Esophagus squamous epithelium (tissue), 5 donors: ENCODE measurements at regions of chr13 and their contacts with region 1.

Region 1: GRCh38 chr13:48412881-48413351 is at the start of gene LPAR6:
- DNase-seq: no peak
- H3K4me3 ChIP-seq: peak within 1 kb of the TSS; percentile 44 to 70 (median 56)
- H3K27ac ChIP-seq: peak within 1 kb of the TSS; percentile 83 to 95 (median 89)
- H3K4me1 ChIP-seq: peaks cover 0 to 42% (median 10%) of the 10 kb centered on the region in 3 donors
- H3K27me3 ChIP-seq: no peaks in the 10 kb centered on the region
- CTCF ChIP-seq: no peak
- POLR2A ChIP-seq: peak in 3 of 4 donors; percentile 82 to 90 (median 87)
- total RNA-seq, gene LPAR6: 50.6 to 102 (median 82.2) TPM

Region 2: DNA sequence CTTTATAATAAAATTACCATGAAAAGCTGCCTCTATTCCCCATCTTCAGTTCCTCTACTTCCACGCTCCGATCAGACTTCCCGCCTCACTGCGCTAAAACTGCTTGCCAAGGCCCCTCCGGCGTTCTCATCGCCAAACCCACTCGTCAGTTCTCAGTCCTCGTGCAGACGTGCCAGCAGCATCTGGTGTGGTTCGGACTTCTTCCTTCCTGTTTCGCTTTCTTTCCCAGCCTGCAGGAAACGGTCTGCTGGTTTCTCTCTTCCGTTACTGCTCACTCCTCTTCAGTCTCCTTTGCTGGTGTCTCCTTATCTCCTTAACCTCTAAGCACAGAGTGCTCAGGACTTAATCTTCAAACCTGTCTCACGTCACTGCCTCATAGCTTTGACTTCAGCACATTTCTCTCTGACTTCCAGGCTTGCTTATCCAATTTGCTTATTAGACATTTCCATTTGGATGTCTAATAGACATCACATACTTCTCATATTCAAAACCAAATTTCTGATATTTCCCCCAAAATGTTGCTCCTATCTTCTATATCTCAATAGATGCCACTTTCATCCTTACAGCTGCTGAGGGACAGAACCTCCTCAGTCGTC is 79.7 kb after region 1 on chr13:
- intact Hi-C with region 1: loop called (anchors 10 kb)
- DNase-seq: peak; percentile 27
- H3K4me3 ChIP-seq: peak overlapping the region in 3 of 4 donors; percentile 21 to 37 (median 24)
- H3K27ac ChIP-seq: peak overlapping the region; percentile 50 to 76 (median 69)
- H3K4me1 ChIP-seq: peaks cover 0 to 60% (median 9%) of the 10 kb centered on the region in 3 donors
- H3K27me3 ChIP-seq: no peaks in the 10 kb centered on the region
- CTCF ChIP-seq: no peak
- POLR2A ChIP-seq: peak in 1 of 4 donors; percentile 47